PC-3 (cell line): ENCODE measurements at regions of chr6 and their contacts with region 1.

Region 1: DNA sequence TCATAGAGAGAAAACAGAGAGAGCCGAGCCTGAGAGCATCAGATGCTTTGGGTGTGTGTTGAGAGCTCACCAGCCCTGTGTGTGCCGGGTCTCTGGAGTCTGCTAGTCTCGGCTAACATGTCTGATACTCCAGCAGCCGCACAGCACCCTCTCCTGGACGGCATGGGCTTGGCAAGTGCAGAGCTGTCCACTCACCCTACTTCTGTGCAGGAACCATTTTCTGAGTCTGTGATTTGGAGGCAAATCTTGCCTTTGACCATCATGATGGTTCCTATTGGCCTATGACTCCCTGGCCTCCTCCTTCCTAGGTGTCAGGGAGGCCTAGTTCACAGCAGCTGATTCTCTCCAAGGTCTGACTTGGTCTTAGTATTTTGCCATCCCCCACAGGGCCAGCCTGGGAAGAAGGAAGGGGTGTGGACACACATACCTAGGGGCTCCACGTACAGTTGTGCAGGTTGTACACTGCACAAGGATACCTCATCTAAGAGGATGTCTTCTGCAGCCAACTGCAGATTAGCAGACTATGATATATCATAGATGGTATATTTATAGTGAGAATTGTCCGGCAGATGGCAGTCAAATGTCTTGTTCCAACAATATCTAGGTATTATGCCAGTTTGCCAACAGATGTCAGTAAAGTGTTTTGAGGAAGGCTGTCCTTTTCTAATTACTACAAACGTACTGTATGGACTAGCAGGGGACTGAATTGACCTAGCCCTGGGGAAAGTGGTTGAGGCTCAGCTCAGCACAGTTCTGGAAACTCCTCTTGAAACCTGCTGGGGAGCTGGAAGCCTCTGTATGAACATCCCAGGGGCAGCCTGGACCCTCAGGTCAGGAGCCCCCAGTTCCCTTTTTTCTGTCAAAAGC is 13.0 kb downstream of the FGD2 start:
- DNase-seq: peak; percentile 94
- ATAC-seq: peak; percentile 96
- H3K4me3 ChIP-seq: no peak overlapping the region
- H3K27ac ChIP-seq: peak overlapping the region; percentile 70
- H3K4me1 ChIP-seq: peaks cover 36% of the 10 kb centered on the region
- H3K27me3 ChIP-seq: no peaks in the 10 kb centered on the region
- CTCF ChIP-seq: peak; percentile 85

Region 2: DNA sequence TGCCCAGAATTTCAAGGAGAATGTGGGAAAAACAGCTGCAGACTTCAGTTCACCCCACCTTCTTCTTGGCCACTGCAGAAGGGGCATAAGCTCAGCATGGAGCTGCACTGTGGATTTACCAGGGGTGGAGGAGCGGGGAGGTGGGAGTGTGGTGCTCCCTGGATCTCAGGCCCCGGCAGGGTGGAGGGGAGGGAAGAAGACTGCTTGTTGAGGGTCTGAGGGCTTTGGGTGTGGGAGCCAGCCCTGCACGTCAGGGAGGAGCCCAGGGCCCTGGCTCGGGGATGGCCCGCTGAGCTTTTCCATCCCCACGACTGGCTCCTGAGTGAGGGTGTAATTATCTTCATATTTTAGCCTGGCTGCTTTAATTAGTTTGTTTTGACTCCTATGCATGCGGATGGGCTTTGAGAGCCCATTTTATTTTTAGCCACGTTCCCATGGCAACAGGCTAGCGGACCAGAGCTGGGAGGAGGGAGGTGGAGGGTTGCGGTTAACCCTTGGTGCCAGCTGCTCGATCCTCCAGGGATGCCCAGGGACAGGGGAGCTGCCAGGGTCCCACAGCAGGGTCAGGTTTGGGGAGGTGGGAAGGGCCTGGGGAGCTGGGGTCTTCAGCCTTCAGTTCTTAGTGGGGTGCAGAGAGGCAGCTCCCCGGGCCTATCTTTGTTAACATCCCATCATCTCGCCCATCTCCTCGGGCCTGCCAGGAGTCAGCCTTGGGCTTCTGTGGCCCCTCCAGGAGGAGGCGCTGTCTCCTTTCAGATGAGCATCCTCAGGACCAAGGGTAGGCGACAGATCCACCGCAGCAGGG is 252.6 kb before region 1 on chr6:
- CTCF ChIA-PET with region 1: interaction called, 4 read pairs
- POLR2A ChIA-PET with region 1: no interaction called
- intact Hi-C with region 1: loop called (anchors 1 kb)
- DNase-seq: peak; percentile 90
- ATAC-seq: peak; percentile 75
- H3K4me3 ChIP-seq: no peak overlapping the region
- H3K27ac ChIP-seq: no peak overlapping the region
- H3K4me1 ChIP-seq: peaks cover 25% of the 10 kb centered on the region
- H3K27me3 ChIP-seq: no peaks in the 10 kb centered on the region
- CTCF ChIP-seq: peak; percentile 97

Region 3: DNA sequence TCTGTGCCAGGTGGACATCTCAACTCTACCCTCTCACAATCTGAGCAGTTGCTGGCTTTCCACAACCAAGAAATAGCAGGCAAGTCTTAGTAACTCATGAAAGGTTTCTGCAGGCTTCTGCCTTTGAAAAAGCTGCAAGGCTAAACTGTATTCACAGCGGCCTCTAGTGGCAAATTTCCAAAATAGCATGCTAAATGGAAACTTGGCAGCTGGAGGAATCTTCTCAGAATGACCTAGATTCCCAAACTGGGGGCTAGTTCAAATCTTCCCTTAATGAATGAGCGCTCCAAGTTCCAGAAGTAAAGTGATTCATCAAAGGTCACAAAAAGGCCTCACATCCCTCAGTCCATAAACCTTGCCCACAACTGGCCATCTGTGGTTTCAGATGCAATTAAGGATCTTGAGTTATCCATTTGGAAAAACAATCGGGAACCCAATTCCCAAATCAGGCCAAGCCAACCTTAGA is 167.2 kb before region 1 on chr6:
- CTCF ChIA-PET with region 1: no interaction called
- POLR2A ChIA-PET with region 1: no interaction called
- intact Hi-C with region 1: no loop called
- DNase-seq: peak; percentile 80
- ATAC-seq: peak; percentile 22; the same call in 1 of the 2 replicates
- H3K4me3 ChIP-seq: no peak overlapping the region
- H3K27ac ChIP-seq: no peak overlapping the region
- H3K4me1 ChIP-seq: peaks cover 9% of the 10 kb centered on the region; the same call in 1 of the 2 replicates
- H3K27me3 ChIP-seq: no peaks in the 10 kb centered on the region
- CTCF ChIP-seq: peak; percentile 93

Region 4: GRCh38 chr6:36897609-36898008 is 120.8 kb before region 1 on chr6:
- CTCF ChIA-PET with region 1: no interaction called
- POLR2A ChIA-PET with region 1: no interaction called
- intact Hi-C with region 1: loop called (anchors 1 kb)
- DNase-seq: peak; percentile 62
- ATAC-seq: peak; percentile 77
- H3K4me3 ChIP-seq: no peak overlapping the region
- H3K27ac ChIP-seq: no peak overlapping the region
- H3K4me1 ChIP-seq: no peaks in the 10 kb centered on the region
- H3K27me3 ChIP-seq: no peaks in the 10 kb centered on the region
- CTCF ChIP-seq: peak; percentile 67

Region 5: GRCh38 chr6:36985808-36986703 is 32.4 kb before region 1 on chr6 and contains the start of gene MTCH1:
- CTCF ChIA-PET with region 1: interaction called, 6 read pairs
- POLR2A ChIA-PET with region 1: no interaction called
- intact Hi-C with region 1: loop called (anchors 1 kb)
- DNase-seq: peak; percentile 92
- ATAC-seq: peak; percentile 89
- H3K4me3 ChIP-seq: peak within 1 kb of the TSS; percentile 99
- H3K27ac ChIP-seq: peak within 1 kb of the TSS; percentile 52
- H3K4me1 ChIP-seq: peaks cover 24% of the 10 kb centered on the region
- H3K27me3 ChIP-seq: no peaks in the 10 kb centered on the region
- CTCF ChIP-seq: no peak
- total RNA-seq, gene MTCH1: 253 and 264 TPM in 2 replicates

Region 6: GRCh38 chr6:37038292-37039198 is 20.1 kb after region 1 on chr6:
- CTCF ChIA-PET with region 1: no interaction called
- POLR2A ChIA-PET with region 1: no interaction called
- intact Hi-C with region 1: no loop called
- DNase-seq: no peak
- ATAC-seq: no peak
- H3K4me3 ChIP-seq: no peak overlapping the region
- H3K27ac ChIP-seq: no peak overlapping the region
- H3K4me1 ChIP-seq: 0 out of 2 replicates have a peak, but pooled peaks cover under 1% of the 10 kb centered on the region
- H3K27me3 ChIP-seq: no peaks in the 10 kb centered on the region
- CTCF ChIP-seq: no peak

Region 7: DNA sequence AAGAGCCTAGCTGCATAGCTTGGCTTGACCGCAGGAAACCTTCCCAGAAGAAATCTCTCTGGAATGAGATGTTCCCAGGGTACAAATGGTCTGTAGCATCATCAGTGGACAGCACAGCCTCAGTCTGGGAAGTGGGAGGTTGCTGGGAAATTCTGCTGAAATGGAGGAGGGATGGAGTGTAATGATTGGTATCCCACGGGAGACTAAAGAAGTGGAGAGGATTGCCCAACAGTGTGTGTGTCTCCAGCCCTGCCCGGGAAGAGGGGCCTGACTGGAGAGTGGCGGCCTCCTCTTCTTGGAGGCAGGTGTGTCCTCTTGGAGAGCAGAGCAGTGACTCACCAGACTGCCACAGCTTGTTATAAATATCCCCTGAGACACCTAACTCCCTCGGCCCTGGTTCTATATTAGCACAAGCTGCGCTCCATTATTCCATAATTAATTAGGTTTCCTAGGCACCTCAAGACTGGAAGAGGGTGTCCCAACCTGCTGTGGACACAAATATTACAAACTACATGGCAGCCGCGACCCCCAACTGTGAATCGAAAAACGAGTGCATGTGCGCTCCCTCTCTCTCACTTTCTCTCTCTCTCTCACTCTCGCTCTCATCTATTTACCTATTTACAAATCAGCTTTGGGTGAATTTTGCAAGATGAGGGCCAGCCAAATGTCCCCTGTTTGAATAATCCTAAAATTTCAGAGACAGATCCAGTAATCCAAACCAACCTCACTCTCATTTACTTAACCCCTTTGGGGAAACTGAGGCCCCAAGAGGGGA is 55.8 kb after region 1 on chr6:
- CTCF ChIA-PET with region 1: no interaction called
- POLR2A ChIA-PET with region 1: no interaction called
- intact Hi-C with region 1: no loop called
- DNase-seq: peak; percentile 14
- ATAC-seq: 0 out of 2 replicates have a peak, but pooled peaks have one; percentile 45
- H3K4me3 ChIP-seq: no peak overlapping the region
- H3K27ac ChIP-seq: no peak overlapping the region
- H3K4me1 ChIP-seq: no peaks in the 10 kb centered on the region
- H3K27me3 ChIP-seq: no peaks in the 10 kb centered on the region
- CTCF ChIP-seq: no peak

Region 8: GRCh38 chr6:37207903-37208456 is 189.5 kb after region 1 on chr6:
- CTCF ChIA-PET with region 1: interaction called, 40 read pairs
- POLR2A ChIA-PET with region 1: no interaction called
- intact Hi-C with region 1: loop called (anchors 1 kb)
- DNase-seq: peak; percentile 90
- ATAC-seq: peak; percentile 80
- H3K4me3 ChIP-seq: no peak overlapping the region
- H3K27ac ChIP-seq: no peak overlapping the region
- H3K4me1 ChIP-seq: peaks cover 7% of the 10 kb centered on the region; the same call in 1 of the 2 replicates
- H3K27me3 ChIP-seq: no peaks in the 10 kb centered on the region
- CTCF ChIP-seq: peak; percentile 90